ENCODE measurements at regions of chr12 and their contacts with region 1.

Region 1: GRCh38 chr12:109775172-109775881 is 57.9 kb downstream of the TRPV4 start:
- DNase-seq: peak; percentile 82
- ATAC-seq: peak; percentile 84

Region 2: DNA sequence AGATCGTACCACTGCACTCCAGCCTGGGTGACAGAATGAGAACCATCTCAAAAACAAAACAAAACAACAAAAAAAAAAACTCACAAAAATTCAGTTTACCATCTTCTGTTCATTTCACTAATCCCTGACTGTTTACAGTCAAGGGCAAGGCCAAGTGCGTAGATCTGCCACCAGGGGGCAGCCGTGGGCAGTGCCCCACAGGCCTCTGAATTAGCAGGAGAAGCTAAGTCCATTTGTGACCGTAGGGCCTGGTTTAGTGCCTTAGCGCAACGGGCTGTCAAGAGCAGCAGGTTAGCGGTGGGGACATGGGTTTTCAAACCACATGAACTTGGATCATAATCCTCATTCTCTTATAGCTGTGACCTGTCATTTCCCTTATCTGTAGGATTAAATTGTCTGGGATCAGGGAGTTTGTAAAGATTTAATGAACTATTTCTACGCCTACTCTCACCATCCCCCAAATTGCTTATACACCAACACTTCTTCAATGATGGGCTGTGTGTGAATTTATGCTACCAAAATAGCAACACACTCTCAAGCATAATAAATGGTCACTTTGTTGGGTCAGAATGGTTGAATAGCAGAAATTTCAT is 347.2 kb before region 1 on chr12:
- intact Hi-C with region 1: loop called (anchors 10 kb)
- DNase-seq: peak; percentile 89
- ATAC-seq: peak; percentile 93

Region 3: DNA sequence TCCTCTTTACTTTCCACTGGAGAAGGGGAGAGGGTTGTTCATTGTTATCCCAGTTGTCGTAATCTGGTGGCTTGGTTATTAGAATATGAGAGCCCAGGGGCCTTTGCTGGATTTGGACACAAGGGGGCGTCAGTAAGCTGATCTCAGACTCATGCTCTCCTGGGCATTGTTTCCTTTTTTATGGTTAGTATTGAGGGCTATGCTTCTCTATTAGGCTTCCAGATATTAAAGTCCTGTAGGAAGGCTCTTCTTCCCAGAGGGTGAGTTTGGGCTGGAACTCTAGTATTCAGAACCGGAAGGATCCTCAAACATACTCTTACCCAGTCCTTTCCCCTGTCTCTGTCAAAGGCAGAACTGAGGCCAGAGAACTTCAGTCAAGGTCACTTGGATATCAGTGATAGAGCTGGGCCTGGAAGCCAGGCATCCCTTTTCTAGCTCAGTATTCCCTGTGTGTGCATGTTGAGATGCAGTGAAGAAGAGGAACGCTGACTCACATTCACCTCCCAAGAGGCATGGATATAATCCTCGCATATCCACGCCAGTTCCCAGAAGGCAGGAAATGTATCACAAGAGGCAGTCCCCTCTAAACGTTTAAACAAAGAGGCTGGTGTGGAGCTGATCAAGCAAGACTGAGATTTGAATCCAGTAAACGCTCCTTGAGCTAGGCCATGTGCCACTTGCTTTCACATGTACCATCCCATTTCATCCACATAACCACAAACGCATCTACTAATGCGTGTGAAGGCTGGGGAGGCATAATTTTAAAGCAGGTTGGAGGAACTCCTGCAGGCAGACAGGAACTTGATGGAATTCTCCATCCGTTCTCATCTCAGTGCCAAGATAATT is 256.3 kb before region 1 on chr12:
- intact Hi-C with region 1: loop called (anchors 5 kb)
- DNase-seq: peak; percentile 74
- ATAC-seq: peak; percentile 71

Region 4: DNA sequence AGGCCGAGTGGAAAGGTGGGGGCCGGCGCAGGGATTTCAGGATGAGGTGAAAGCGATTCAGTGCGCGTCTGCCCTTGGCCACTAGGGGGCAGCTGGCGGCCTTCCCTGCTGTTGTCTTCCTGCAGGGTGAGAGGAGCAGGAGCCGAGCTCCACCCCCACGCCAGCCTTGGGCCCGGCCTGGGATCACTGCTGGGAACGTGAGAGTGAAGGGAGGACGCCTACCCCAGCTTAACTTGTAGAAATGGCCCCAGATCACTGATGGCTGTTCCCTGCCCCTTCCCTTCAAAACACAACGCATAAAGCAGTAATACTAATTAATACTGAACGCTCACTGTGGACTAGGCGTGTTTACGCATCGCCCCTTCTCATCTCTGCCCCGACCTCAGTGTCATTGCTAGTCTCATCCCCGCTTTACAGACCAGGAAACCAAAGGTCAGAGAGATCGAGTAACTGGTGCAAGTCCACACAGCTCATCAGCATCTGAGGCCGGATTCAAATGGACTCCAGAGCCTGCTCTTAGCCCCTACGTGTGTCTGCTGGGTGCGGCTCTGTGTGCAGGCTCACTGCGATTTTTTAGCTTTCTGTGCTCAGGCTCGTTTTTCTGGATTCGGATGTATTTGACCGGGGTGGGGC is 177.4 kb before region 1 on chr12:
- intact Hi-C with region 1: loop called (anchors 1 kb)
- DNase-seq: peak; percentile 92
- ATAC-seq: peak; percentile 90

Region 5: GRCh38 chr12:109719236-109720022 is 55.9 kb before region 1 on chr12:
- intact Hi-C with region 1: loop called (anchors 5 kb)
- DNase-seq: no peak
- ATAC-seq: no peak

Region 6: GRCh38 chr12:109855377-109855776 is 80.0 kb after region 1 on chr12:
- intact Hi-C with region 1: no loop called
- DNase-seq: no peak
- ATAC-seq: no peak

Measured in Right ventricle myocardium superior (tissue), 1 donor.